SK-N-SH (cell line): ENCODE measurements at regions of chr5 and their contacts with region 1.

Region 1: DNA sequence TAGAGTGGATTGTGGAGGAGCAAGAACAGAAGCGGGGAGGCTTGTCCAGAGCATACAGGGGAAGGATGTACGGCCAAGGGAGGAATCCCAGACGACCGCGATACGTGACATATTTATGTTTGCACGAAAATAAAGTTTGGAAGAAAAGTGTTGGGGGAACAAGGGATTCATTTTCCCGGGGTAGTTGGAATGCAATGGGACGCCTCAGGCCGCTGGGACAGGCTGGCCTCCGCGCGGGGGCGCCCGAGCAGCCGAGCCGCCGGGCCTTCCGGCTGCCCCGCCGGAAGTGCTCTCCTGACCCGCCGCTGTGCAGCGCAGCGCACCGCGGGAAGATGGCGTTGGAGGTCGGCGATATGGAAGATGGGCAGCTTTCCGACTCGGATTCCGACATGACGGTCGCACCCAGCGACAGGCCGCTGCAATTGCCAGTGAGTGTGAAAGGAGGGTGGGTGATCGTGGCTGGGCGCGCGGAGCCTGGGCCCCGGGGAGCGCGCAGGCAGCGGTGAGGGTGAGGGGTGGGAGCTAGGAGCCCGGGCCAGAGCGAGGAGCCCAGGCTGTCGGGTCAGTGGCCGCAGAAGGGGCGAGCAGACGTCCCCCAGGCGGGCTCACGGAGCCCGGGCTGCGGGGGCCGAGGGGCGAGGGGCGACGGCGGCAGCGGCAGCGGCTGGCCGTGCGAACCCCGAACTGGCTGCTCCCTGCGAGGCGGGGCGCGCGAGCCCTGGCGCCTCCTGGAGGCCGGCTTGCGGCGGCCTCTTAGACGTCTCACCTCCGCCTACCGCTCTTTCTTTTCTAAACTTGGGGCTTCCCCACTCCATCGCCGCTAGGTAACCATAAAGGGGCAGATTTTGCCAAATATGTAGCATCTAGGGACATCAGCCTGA is at the start of gene PHAX:
- DNase-seq: peak; percentile 94
- H3K4me3 ChIP-seq: peak within 1 kb of the TSS; percentile 81 to 82
- H3K27ac ChIP-seq: peak within 1 kb of the TSS; percentile 81
- H3K4me1 ChIP-seq: peaks cover 6 to 8% of the 10 kb centered on the region in 2 experiments; a peak in 2 of 4 replicates
- H3K27me3 ChIP-seq: no peaks in the 10 kb centered on the region
- CTCF ChIP-seq: peak; percentile 74
- EP300 ChIP-seq: peak in 1 of 2 experiments; percentile 35; a peak in 1 of 4 replicates
- RAD21 ChIP-seq: peak; percentile 33
- polyA plus RNA-seq, gene PHAX: 25.1 and 27.4 TPM in 2 replicates

Region 2: DNA sequence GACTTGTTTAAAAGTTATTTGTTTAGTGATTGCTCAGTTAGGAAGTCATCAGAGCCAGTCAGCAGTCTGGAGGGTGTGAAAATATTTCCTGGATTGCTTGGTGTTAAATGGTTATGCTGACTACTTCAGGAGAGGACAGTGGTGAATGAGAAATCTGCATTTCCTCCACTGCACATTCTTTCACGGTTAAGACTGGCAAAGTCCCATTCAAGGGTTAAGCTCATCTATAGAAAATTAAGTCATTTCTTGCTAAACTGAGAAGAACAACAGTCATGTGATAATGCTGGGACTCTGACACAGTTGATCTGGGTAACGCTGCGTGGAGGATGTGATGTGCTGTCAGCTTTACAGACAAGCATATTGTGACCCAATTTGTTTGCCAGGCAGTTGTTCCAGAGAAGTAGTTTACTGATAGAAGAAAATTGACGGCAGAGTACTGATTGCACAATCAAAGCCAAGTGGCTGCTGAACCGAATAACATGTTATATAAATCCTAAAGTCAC is 97.2 kb before region 1 on chr5:
- CTCF ChIA-PET with region 1: no interaction called
- POLR2A ChIA-PET with region 1: no interaction called
- DNase-seq: no peak
- H3K4me3 ChIP-seq: no peak overlapping the region
- H3K27ac ChIP-seq: no peak overlapping the region
- H3K4me1 ChIP-seq: no peaks in the 10 kb centered on the region
- H3K27me3 ChIP-seq: no peaks in the 10 kb centered on the region
- CTCF ChIP-seq: no peak
- EP300 ChIP-seq: no peak
- RAD21 ChIP-seq: no peak

Region 3: GRCh38 chr5:126576974-126577373 is 23.9 kb before region 1 on chr5:
- CTCF ChIA-PET with region 1: interaction called, 14 read pairs
- POLR2A ChIA-PET with region 1: interaction called, 3 read pairs
- DNase-seq: no peak
- H3K4me3 ChIP-seq: no peak overlapping the region
- H3K27ac ChIP-seq: no peak overlapping the region
- H3K4me1 ChIP-seq: no peaks in the 10 kb centered on the region
- H3K27me3 ChIP-seq: no peaks in the 10 kb centered on the region
- CTCF ChIP-seq: no peak
- EP300 ChIP-seq: no peak
- RAD21 ChIP-seq: no peak

Region 4: GRCh38 chr5:126628102-126628501 is 27.2 kb after region 1 on chr5:
- CTCF ChIA-PET with region 1: interaction called, 18 read pairs
- POLR2A ChIA-PET with region 1: no interaction called
- DNase-seq: no peak
- H3K4me3 ChIP-seq: no peak overlapping the region
- H3K27ac ChIP-seq: no peak overlapping the region
- H3K4me1 ChIP-seq: no peaks in the 10 kb centered on the region
- H3K27me3 ChIP-seq: no peaks in the 10 kb centered on the region
- CTCF ChIP-seq: no peak
- EP300 ChIP-seq: no peak
- RAD21 ChIP-seq: no peak